Right ventricle myocardium superior (tissue), 1 donor: ENCODE measurements at regions of chr1 and their contacts with region 1.

Region 1: DNA sequence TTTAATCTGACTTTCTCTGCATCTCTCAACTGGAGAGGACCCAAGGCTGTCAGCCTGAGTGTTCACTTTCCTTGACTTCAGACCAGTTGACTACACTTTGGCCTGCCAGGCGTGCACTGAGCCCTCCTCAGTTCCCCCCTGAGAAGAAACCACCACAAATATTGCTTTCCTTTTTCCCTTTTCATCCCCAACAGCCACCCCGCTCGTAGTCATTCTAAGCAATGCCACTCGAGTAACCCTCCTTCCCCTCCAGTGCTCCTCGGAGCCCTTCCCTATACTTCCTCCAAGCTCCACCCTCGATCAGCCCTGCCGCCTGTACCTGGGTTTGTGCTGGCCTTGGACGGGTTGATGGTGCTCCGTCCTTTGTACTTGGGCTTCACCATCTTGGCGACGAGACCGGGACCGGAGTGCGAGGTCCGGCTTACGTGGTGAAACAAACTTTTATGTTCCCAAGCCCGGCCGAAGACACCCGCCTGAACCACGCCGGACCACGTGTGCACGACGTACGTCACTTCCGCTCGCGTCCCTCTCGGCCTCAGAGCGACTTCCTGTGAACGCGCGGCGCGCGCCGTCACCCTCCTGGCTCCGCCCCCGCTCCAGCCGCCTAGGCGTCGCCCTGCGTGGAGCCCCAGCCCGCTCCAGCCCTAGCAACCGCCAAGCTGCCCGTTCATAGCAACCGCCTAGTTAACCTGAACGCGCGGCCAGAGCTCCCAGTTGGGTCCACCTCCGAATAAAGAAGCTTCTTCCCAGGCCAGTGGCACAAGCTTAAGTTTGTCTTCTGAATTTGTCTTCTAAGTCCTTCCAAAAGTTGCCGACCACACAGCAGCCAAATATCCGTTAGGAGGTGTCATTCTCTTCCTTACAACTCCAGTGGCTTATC is at the start of gene GNL2:
- DNase-seq: peak; percentile 99
- ATAC-seq: peak; percentile 100
- total RNA-seq, gene GNL2: 20.1 TPM

Region 2: GRCh38 chr1:37553927-37554808 is 41.5 kb before region 1 on chr1 and contains the start of gene SNIP1:
- intact Hi-C with region 1: no loop called
- DNase-seq: peak; percentile 93
- ATAC-seq: peak; percentile 97
- total RNA-seq, gene SNIP1: 7.4 TPM

Region 3: DNA sequence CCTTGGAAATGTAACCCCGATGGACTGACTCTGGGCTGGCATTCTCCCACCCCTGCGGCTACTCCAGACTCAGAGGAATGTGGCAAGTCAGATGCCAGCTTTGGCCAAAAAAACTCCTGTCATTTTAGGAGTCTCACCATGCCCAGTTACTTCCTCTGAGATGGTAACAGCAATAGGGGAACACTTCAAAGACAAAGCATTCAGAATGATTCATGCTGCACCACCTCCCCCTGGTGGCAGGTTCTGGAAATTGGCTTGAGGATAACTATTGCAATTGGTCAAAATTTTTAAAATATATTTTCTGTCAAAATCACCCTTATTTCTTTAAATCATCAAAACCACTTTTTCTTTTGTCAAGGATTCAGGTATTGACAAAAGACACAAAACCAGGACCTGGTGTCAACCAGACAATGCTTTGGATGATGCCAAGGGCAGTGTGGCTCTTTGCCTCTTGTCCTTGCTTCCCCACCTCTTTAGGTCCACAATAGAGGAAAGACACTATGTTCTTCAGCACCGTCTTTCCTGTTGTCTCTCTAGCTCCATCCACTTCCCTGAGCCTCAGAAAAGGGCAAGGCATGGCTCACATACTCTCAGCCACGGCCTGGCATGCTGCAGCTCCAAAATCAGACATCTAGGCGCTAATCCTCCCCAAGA is 86.8 kb after region 1 on chr1:
- intact Hi-C with region 1: loop called (anchors 5 kb)
- DNase-seq: peak; percentile 72
- ATAC-seq: peak; percentile 74